ENCODE measurements at regions of chr2 and their contacts with region 1.

Region 1: GRCh38 chr2:158745044-158745865 is 49.9 kb upstream of the DAPL1 start:
- DNase-seq: peak in 2 of 4 experiments; percentile 32 to 58
- ATAC-seq: peak; percentile 88
- H3K4me3 ChIP-seq: no peak overlapping the region
- H3K27ac ChIP-seq: no peak overlapping the region
- H3K4me1 ChIP-seq: no peaks in the 10 kb centered on the region; a peak in 2 of 5 replicates
- H3K27me3 ChIP-seq: peaks cover 26 to 55% of the 10 kb centered on the region in 2 experiments
- CTCF ChIP-seq: peak; percentile 56 to 77 (median 65)
- EP300 ChIP-seq: no peak
- POLR2A ChIP-seq: no peak
- RAD21 ChIP-seq: peak; percentile 60 to 78

Region 2: DNA sequence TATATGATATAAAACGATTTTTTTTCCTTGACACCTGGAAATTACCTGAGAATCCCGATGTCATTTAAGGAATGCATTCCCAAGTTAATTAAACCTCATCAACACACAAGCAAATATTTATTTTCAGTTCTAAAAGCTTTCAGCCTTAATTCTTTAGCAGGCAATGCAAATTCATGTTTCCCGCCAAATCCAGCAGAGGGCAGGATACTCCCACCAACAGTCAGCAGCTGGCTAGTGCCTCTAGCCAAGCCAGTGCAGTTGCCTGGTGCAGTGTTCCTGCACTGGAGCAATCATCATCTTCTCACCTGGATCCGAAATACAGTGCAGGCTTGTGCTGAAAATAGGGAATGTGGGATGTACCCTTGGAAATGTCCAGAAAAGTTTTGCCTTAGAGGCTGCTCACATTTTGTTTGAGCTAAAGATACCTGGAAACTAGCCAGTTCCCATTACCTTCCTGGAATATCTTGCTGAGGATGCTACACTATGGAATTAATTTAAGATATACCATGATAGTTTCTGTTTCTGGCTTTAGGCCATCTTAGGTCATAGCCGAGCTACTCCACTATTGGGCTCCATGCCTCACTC is 1253.0 kb before region 1 on chr2:
- CTCF ChIA-PET with region 1: no interaction called
- POLR2A ChIA-PET with region 1: no interaction called
- in situ Hi-C with region 1: loop called (anchors 25 kb)
- intact Hi-C with region 1: loop called (anchors 5 kb)
- DNase-seq: peak; percentile 29 to 78 (median 54)
- ATAC-seq: peak; percentile 98
- H3K4me3 ChIP-seq: no peak overlapping the region
- H3K27ac ChIP-seq: no peak overlapping the region
- H3K4me1 ChIP-seq: no peaks in the 10 kb centered on the region
- H3K27me3 ChIP-seq: peaks cover 0 to 4% of the 10 kb centered on the region in 2 experiments; a peak in 1 of 5 replicates
- CTCF ChIP-seq: peak; percentile 84 to 94 (median 87)
- EP300 ChIP-seq: no peak
- POLR2A ChIP-seq: no peak
- RAD21 ChIP-seq: peak; percentile 92 to 96

Region 3: GRCh38 chr2:157777427-157777826 is 967.8 kb before region 1 on chr2:
- CTCF ChIA-PET with region 1: no interaction called
- POLR2A ChIA-PET with region 1: no interaction called
- in situ Hi-C with region 1: loop called (anchors 10 kb)
- intact Hi-C with region 1: no loop called
- DNase-seq: peak; percentile 60 to 70 (median 66)
- ATAC-seq: peak; percentile 67; the same call in 2 of the 3 replicates
- H3K4me3 ChIP-seq: no peak overlapping the region
- H3K27ac ChIP-seq: no peak overlapping the region
- H3K4me1 ChIP-seq: peaks cover 0 to 9% of the 10 kb centered on the region in 2 experiments; a peak in 4 of 5 replicates
- H3K27me3 ChIP-seq: no peaks in the 10 kb centered on the region
- CTCF ChIP-seq: peak; percentile 54 to 86 (median 58); a peak in 4 of 6 replicates
- EP300 ChIP-seq: no peak
- POLR2A ChIP-seq: no peak
- RAD21 ChIP-seq: peak; percentile 93 to 94

Region 4: GRCh38 chr2:158034199-158034866 is 710.9 kb before region 1 on chr2:
- CTCF ChIA-PET with region 1: interaction called, 7 read pairs
- POLR2A ChIA-PET with region 1: no interaction called
- in situ Hi-C with region 1: loop called (anchors 5 kb)
- intact Hi-C with region 1: loop called (anchors 2 kb)
- DNase-seq: peak; percentile 24 to 74 (median 43)
- ATAC-seq: peak; percentile 96
- H3K4me3 ChIP-seq: no peak overlapping the region
- H3K27ac ChIP-seq: no peak overlapping the region
- H3K4me1 ChIP-seq: no peaks in the 10 kb centered on the region
- H3K27me3 ChIP-seq: peaks cover 3 to 7% of the 10 kb centered on the region in 2 experiments; a peak in 3 of 5 replicates
- CTCF ChIP-seq: peak; percentile 65 to 85 (median 75)
- EP300 ChIP-seq: no peak
- POLR2A ChIP-seq: no peak
- RAD21 ChIP-seq: peak; percentile 88 to 91

Region 5: GRCh38 chr2:158456309-158457066 is 288.8 kb before region 1 on chr2 and contains the starts of genes CCDC148 and PKP4:
- CTCF ChIA-PET with region 1: no interaction called
- POLR2A ChIA-PET with region 1: no interaction called
- in situ Hi-C with region 1: no loop called
- intact Hi-C with region 1: loop called (anchors 5 kb)
- DNase-seq: peak; percentile 97 to 99 (median 99)
- ATAC-seq: peak; percentile 92
- H3K4me3 ChIP-seq: peak within 1 kb of the TSS; percentile 85
- H3K27ac ChIP-seq: peak within 1 kb of the TSS; percentile 84
- H3K4me1 ChIP-seq: peaks cover 19 to 25% of the 10 kb centered on the region in 2 experiments
- H3K27me3 ChIP-seq: no peaks in the 10 kb centered on the region
- CTCF ChIP-seq: peak; percentile 0 to 20 (median 9); a peak in 1 of 6 replicates
- EP300 ChIP-seq: no peak
- POLR2A ChIP-seq: no peak
- RAD21 ChIP-seq: no peak
- polyA plus RNA-seq, gene CCDC148: 0.77 to 1.4 TPM
- polyA plus RNA-seq, gene PKP4: 24.6 to 29.4 TPM